ENCODE measurements at regions of chr10 and their contacts with region 1.

Region 1: DNA sequence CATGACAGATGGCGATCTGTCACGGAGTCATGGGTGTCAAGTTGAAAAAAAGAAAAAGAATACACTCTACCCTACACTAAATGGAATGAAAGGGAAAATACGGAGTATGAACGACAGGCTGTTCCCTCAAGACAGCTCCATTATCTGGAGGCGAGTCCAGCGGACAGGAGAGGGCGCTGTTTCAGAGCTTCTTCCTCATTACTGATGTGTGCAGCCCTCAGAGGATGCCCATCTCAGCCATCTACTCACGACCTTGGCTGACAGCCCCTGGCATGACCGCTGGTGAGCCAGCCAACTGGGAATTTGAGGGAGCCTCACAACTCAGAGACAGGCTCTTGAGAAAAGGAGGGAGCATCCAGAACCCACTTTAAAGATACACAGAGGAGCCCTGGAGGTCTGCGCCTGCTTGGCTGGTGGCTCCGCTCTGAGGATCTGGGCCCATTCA is 49.6 kb upstream of the SMNDC1 start:
- DNase-seq: peak; percentile 90
- ATAC-seq: peak; percentile 45
- H3K4me3 ChIP-seq: no peak overlapping the region; the same call in 1 of the 2 replicates
- H3K27ac ChIP-seq: peak overlapping the region; percentile 59
- H3K4me1 ChIP-seq: peaks cover 37% of the 10 kb centered on the region
- H3K27me3 ChIP-seq: no peaks in the 10 kb centered on the region
- CTCF ChIP-seq: peak; percentile 92
- POLR2A ChIP-seq: no peak; the same call in 1 of the 2 replicates
- RAD21 ChIP-seq: peak; percentile 86

Region 2: DNA sequence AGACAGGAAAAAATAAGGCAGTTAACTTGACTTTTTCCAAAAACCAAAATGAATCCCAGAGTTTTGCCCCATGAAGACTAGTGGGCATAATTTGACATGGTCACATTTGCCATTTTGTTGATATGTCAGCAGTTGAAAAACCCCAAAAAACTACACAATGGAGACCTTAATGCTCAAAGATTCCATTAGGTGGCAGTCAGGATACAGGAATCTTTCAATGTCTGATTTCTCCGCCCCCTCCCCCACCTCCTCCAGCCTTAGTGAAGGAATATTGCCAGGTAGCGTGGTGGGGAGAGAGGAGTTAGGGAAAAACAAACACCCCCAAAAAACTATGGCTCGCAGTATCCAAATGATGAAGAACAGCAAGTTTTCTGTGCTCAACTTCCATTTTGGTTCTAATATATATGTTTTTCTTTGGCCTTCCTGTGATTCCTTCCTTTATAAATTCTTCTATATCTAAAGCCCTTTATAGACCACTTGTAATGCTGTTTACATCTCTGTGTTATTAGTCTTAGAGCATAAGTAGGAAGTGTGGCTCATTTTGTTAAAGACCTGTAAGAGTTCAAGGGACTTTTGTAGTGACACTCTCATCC is 42.9 kb before region 1 on chr10:
- CTCF ChIA-PET with region 1: interaction called, 6 read pairs
- POLR2A ChIA-PET with region 1: no interaction called
- dilution Hi-C with region 1: no loop called
- in situ Hi-C with region 1: no loop called
- intact Hi-C with region 1: loop called (anchors 1 kb)
- DNase-seq: peak; percentile 70
- ATAC-seq: peak; percentile 97
- H3K4me3 ChIP-seq: no peak overlapping the region
- H3K27ac ChIP-seq: no peak overlapping the region
- H3K4me1 ChIP-seq: no peaks in the 10 kb centered on the region
- H3K27me3 ChIP-seq: no peaks in the 10 kb centered on the region
- CTCF ChIP-seq: peak; percentile 80
- POLR2A ChIP-seq: no peak
- RAD21 ChIP-seq: peak; percentile 95

Region 3: DNA sequence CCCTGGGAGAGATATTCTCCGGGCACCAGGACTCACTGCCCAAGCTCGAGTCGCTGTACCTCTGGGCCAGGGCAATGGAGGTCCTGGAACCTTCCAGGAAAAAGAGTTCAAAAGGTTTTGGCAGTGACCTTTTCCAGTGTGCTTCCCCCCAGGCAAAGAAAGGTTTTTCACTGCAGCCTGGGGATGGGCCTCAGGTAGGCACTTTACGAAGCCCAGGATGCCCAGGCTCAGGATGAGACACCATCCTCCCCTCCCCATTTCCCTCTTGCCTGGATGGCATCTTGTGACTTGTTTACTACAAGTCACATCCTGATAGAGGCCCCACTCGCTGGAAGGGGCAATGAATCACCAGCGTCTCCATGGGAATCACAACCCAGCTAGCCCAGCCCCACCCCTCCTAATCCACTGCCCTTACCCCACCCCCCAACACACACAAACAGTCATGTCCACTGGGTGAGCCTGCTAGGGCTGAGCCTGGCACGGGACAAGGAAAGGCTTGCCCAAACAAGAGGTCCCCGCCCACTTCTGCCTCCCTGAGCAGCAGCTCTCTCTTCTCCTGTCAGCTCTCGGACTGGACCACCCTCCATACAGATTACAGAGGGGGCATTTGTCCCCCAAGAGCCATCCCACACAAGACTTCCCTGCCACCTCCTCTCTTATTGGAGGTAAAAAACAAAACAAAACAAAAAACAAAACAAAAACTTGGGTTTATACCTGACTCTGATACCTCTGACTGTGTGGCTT is 44.2 kb after region 1 on chr10:
- CTCF ChIA-PET with region 1: interaction called, 5 read pairs
- POLR2A ChIA-PET with region 1: interaction called, 3 read pairs
- dilution Hi-C with region 1: no loop called
- in situ Hi-C with region 1: no loop called
- intact Hi-C with region 1: loop called (anchors 1 kb)
- DNase-seq: peak; percentile 98
- ATAC-seq: peak; percentile 92
- H3K4me3 ChIP-seq: no peak overlapping the region
- H3K27ac ChIP-seq: peak overlapping the region; percentile 74
- H3K4me1 ChIP-seq: peaks cover 22% of the 10 kb centered on the region
- H3K27me3 ChIP-seq: no peaks in the 10 kb centered on the region
- CTCF ChIP-seq: no peak
- POLR2A ChIP-seq: 0 out of 2 replicates have a peak, but pooled peaks have one; percentile 56
- RAD21 ChIP-seq: peak; percentile 17

Region 4: DNA sequence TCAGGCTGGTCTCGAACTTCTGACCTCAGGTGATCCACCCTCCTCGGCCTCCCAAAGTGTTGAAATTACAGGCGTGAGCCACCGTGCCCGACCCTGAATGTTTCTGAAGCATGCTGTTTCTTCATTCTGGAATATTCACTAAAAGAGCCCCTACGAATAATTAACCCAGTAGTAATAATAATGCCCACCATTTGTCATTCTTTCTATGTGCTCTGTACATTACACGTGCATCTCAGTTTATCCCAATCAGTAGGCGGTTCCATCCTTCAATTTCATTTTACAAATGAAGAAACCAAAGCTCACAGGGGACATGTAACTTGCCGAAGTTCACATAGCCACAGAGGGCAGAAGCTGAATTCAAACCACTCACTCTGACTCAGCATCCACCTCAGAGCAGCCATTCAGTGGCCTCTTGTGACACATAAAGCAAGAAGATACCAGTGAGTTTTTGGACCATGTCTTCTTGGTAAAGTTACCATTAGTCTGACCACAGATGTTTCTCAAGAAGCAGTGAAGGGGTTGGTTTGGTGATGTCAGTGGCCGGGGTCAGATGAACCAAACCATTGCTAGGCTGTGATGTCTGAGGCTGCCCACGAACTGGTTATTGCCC is 71.4 kb after region 1 on chr10:
- CTCF ChIA-PET with region 1: no interaction called
- POLR2A ChIA-PET with region 1: no interaction called
- dilution Hi-C with region 1: no loop called
- in situ Hi-C with region 1: no loop called
- intact Hi-C with region 1: loop called (anchors 1 kb)
- DNase-seq: peak; percentile 99
- ATAC-seq: peak; percentile 71
- H3K4me3 ChIP-seq: no peak overlapping the region
- H3K27ac ChIP-seq: peak overlapping the region; percentile 87
- H3K4me1 ChIP-seq: peaks cover 14% of the 10 kb centered on the region
- H3K27me3 ChIP-seq: no peaks in the 10 kb centered on the region
- CTCF ChIP-seq: no peak
- POLR2A ChIP-seq: peak; percentile 28; the same call in 1 of the 2 replicates
- RAD21 ChIP-seq: no peak

Region 5: DNA sequence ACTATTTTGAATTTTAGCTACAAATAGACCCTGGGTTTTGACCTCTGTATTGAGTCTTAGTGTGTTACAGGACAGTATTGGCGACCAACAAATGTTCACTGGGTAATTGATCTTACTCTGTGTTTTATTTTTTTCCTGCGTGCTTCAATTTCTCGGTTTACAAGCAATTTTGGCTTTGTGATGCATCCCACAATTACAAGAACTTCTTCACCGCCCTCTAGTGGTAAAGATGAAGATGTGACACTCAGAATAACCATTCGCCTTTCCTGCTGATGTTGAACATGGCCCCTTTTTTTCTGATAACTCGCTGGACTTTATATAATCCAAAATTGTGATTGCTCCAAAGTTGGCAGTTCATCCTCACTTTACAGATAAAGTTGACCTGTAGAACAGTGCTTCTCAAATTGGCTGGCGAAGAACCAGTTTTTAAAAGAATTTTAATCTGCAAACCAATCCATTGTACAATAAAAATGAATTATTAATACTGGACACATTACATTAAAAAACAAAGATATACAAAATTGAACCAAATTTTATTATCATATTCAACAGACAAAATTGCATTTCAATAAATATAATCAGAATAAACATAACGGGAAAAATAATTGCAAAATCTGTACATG is 192.9 kb after region 1 on chr10:
- CTCF ChIA-PET with region 1: interaction called, 12 read pairs
- POLR2A ChIA-PET with region 1: no interaction called
- dilution Hi-C with region 1: no loop called
- in situ Hi-C with region 1: no loop called
- intact Hi-C with region 1: loop called (anchors 1 kb)
- DNase-seq: peak; percentile 77
- ATAC-seq: peak; percentile 73
- H3K4me3 ChIP-seq: no peak overlapping the region
- H3K27ac ChIP-seq: no peak overlapping the region
- H3K4me1 ChIP-seq: peaks cover 2% of the 10 kb centered on the region; the same call in 1 of the 2 replicates
- H3K27me3 ChIP-seq: peaks cover 2% of the 10 kb centered on the region; the same call in 1 of the 2 replicates
- CTCF ChIP-seq: peak; percentile 82
- POLR2A ChIP-seq: no peak
- RAD21 ChIP-seq: peak; percentile 86

Region 6: DNA sequence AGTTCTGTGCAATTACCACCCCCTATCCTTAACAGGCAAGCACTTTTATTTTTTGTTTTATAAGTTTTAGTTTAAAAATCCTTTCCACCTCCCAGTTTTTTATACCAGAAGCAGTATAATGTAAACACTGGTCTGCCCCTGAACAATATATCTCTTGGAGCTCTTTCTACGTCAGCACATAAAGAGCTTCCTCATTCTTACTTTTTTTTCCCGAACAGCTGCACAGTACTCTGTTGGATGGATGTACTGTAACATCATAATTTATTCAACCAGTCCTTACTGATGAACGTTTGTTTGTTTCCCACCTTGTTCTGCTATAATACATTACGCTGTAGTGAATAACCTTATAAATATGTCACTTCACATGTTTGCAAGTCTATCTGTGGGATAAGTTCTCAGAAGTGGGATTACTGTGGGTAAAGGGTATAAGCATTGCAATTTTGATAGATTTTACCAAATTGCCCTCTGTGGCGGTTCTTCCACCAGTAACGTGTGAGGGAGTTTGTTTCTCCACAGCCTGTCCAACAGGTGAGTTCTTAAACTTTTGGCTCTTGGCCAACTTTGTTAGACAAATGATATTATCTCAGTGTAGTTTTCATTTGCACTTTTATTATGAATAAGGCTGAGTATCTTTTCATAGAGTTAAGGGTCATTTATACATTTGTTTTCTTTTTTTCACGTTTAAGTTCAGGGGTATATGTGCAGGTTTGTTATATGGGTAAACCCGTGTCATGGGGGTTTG is 755.3 kb after region 1 on chr10:
- CTCF ChIA-PET with region 1: no interaction called
- POLR2A ChIA-PET with region 1: no interaction called
- dilution Hi-C with region 1: no loop called
- in situ Hi-C with region 1: no loop called
- intact Hi-C with region 1: no loop called
- DNase-seq: no peak
- ATAC-seq: no peak
- H3K4me3 ChIP-seq: no peak overlapping the region
- H3K27ac ChIP-seq: no peak overlapping the region
- H3K4me1 ChIP-seq: no peaks in the 10 kb centered on the region
- H3K27me3 ChIP-seq: no peaks in the 10 kb centered on the region
- CTCF ChIP-seq: no peak
- POLR2A ChIP-seq: no peak
- RAD21 ChIP-seq: no peak